ENCODE measurements at regions of chr2 and their contacts with region 1.

Region 1: DNA sequence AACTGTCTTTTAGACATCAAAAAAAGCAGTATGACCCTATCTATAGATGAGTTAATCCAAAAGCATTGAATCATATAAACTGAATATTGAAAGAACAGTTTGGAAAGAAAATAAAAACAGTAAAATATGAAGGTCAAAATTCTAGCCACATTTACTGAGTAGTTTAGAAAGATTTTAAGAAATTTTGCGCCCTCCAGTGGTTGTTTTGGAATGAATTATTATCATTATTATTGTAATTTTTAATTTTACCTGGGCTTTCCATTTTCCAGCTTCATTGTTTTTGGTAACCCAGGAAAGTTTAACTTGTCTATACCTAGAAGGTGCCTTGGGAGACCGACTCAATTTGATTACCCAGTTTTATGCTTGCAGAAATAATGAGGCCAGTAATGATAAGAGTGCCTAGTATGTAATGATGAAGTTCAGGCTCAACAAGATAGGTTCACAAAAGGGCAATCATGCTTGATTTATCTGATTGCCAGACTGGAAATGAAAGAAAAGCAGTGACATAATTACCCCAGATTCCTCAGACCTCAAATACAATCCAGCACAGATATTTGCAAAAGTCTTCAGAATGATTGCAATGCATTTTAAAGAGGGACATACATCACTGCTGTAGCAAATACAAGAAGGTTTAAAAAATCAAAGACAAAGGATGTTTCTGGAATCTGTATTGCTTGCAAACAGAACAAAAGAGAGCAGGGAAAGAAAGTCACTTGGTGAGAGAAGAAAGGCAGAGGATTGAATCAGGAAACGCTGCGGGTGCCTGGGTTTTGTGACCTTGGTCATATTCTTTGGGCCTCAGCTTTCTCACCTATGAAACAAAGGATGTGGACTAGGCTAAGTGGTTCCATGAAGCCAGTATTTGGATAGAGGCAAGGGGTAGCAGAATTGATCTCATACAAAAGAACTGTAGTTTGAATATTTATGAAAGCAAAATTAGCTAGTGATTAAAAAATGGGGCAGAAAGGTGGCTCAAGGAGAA is 153.8 kb downstream of the MAP2 start:
- DNase-seq: no peak
- ATAC-seq: no peak
- H3K4me3 Mint-ChIP-seq: no peak overlapping the region
- H3K27ac Mint-ChIP-seq: no peak overlapping the region
- H3K4me1 Mint-ChIP-seq: peaks cover 8% of the 10 kb centered on the region
- H3K27me3 Mint-ChIP-seq: no peaks in the 10 kb centered on the region
- CTCF ChIP-seq: no peak

Region 2: DNA sequence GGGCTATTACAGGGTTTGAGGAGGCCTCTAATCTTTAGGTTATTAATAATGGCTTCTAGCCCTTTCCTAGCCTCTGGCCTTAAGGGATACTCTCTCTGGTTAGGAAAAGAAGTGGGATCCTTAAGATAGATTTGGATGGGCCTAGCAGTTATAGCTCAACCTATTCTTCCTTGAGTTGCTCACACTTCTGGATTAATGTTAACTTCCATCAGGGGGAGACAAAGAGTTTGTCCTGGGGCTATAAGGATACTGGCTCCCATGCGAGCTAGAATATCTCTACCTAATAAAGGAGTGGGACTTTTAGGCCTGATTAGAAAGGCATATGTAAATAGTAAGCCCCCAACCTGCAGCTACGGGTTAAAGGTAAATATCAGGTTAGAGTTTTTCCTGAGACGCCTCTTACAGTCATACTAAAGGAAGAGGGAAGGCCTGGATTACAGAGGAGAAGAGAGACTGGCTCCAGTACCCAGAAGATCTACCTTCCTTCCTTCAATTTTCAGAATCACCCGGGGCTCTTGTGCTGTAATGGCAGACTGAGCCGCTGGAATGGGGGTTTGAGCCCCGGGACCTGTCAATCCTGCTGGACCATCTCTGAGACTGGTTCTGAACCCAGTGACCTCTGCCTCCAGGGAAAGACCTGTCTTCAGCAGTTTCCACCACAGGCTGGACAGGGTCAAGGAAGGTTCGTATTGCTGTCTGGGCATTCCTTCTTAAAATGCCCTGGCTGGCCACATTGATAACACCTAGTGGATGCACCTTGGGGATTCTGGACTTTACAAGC is 1185.2 kb before region 1 on chr2:
- CTCF ChIA-PET with region 1: no interaction called
- POLR2A ChIA-PET with region 1: no interaction called
- intact Hi-C with region 1: loop called (anchors 2 kb)
- DNase-seq: no peak
- ATAC-seq: no peak
- H3K4me3 Mint-ChIP-seq: no peak overlapping the region
- H3K27ac Mint-ChIP-seq: no peak overlapping the region
- H3K4me1 Mint-ChIP-seq: no peaks in the 10 kb centered on the region
- H3K27me3 Mint-ChIP-seq: peaks cover 3% of the 10 kb centered on the region
- CTCF ChIP-seq: no peak

Region 3: GRCh38 chr2:208466151-208466919 is 1111.3 kb before region 1 on chr2:
- CTCF ChIA-PET with region 1: no interaction called
- POLR2A ChIA-PET with region 1: no interaction called
- intact Hi-C with region 1: loop called (anchors 2 kb)
- DNase-seq: no peak
- ATAC-seq: no peak
- H3K4me3 Mint-ChIP-seq: no peak overlapping the region
- H3K27ac Mint-ChIP-seq: no peak overlapping the region
- H3K4me1 Mint-ChIP-seq: no peaks in the 10 kb centered on the region
- H3K27me3 Mint-ChIP-seq: peaks cover 16% of the 10 kb centered on the region
- CTCF ChIP-seq: no peak

Region 4: GRCh38 chr2:209334198-209335017 is 243.3 kb before region 1 on chr2:
- CTCF ChIA-PET with region 1: interaction called, 70 read pairs
- POLR2A ChIA-PET with region 1: no interaction called
- intact Hi-C with region 1: loop called (anchors 1 kb)
- DNase-seq: no peak
- ATAC-seq: peak; percentile 56
- H3K4me3 Mint-ChIP-seq: no peak overlapping the region
- H3K27ac Mint-ChIP-seq: no peak overlapping the region
- H3K4me1 Mint-ChIP-seq: no peaks in the 10 kb centered on the region
- H3K27me3 Mint-ChIP-seq: peaks cover 4% of the 10 kb centered on the region
- CTCF ChIP-seq: peak; percentile 97

Region 5: GRCh38 chr2:209559820-209560219 is 17.8 kb before region 1 on chr2:
- CTCF ChIA-PET with region 1: no interaction called
- POLR2A ChIA-PET with region 1: no interaction called
- intact Hi-C with region 1: no loop called
- DNase-seq: no peak
- ATAC-seq: no peak
- H3K4me3 Mint-ChIP-seq: no peak overlapping the region
- H3K27ac Mint-ChIP-seq: no peak overlapping the region
- H3K4me1 Mint-ChIP-seq: no peaks in the 10 kb centered on the region
- H3K27me3 Mint-ChIP-seq: no peaks in the 10 kb centered on the region
- CTCF ChIP-seq: no peak

Region 6: GRCh38 chr2:209960676-209961630 is 383.3 kb after region 1 on chr2:
- CTCF ChIA-PET with region 1: no interaction called
- POLR2A ChIA-PET with region 1: no interaction called
- intact Hi-C with region 1: loop called (anchors 10 kb)
- DNase-seq: no peak
- ATAC-seq: peak; percentile 47
- H3K4me3 Mint-ChIP-seq: no peak overlapping the region
- H3K27ac Mint-ChIP-seq: no peak overlapping the region
- H3K4me1 Mint-ChIP-seq: no peaks in the 10 kb centered on the region
- H3K27me3 Mint-ChIP-seq: peaks cover 8% of the 10 kb centered on the region
- CTCF ChIP-seq: peak; percentile 31